ENCODE measurements at regions of chr4 and their contacts with region 1.

Region 1: DNA sequence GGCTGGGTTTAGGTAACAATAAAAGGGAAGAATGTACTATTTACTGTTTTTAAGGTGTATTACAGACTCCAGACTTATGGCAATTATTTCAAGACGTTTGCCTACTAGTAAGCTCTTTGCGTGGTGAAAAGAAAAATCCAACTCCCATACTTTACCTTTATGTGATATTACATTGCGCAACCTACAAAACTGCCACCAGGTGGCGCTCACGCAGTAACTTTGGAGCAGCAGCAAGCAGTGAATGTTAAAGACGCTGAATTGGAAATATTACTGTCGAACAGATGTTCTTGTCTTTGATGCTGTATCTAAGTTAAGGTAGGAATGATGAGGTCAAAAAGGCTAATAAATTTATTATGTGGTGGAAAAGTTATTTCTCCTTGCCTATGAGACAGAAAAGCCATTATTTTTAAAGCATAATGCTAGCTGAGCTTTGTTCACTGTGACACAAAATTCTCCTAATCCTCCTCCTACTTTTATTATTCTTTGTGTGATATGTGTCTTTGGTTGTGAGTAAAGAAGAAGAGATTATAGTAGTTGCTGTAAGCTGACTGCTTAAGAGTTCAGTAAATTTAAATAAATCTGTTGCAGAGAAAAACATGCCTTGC is 1099.8 kb upstream of the TENM3 start:
- DNase-seq: no peak
- H3K4me3 ChIP-seq: no peak overlapping the region
- H3K27ac ChIP-seq: no peak overlapping the region
- H3K4me1 ChIP-seq: no peaks in the 10 kb centered on the region
- H3K27me3 ChIP-seq: peaks cover 0 to 26% (median 0%) of the 10 kb centered on the region in 4 donors
- CTCF ChIP-seq: peak; percentile 52 to 85 (median 78)
- POLR2A ChIP-seq: no peak

Region 2: GRCh38 chr4:180350901-180351300 is 792.5 kb before region 1 on chr4:
- intact Hi-C with region 1: no loop called
- DNase-seq: no peak
- H3K4me3 ChIP-seq: no peak overlapping the region
- H3K27ac ChIP-seq: no peak overlapping the region
- H3K4me1 ChIP-seq: no peaks in the 10 kb centered on the region
- H3K27me3 ChIP-seq: no peaks in the 10 kb centered on the region
- CTCF ChIP-seq: no peak
- POLR2A ChIP-seq: no peak

Region 3: DNA sequence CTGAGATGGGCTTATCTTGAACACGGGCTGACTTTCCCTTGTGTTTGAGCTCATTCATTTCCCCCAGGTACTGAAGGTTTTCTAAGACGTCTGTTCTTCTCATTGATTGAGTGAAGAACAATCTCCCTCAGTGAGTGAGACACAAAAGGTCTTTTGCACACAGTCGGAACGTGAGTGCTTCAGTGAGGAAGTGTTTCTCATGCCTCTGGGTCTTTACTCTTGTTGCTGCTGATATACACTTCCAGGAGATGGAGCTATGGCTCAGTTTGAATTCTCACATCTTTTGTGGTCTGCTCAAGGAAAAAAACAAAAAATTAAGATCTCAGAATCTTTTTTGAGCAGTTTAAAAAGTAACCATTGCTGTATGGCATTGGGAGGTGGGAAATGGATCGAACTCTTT is 117.9 kb after region 1 on chr4:
- intact Hi-C with region 1: no loop called
- DNase-seq: no peak
- H3K4me3 ChIP-seq: no peak overlapping the region
- H3K27ac ChIP-seq: no peak overlapping the region
- H3K4me1 ChIP-seq: no peaks in the 10 kb centered on the region
- H3K27me3 ChIP-seq: no peaks in the 10 kb centered on the region
- CTCF ChIP-seq: no peak
- POLR2A ChIP-seq: no peak

Region 4: GRCh38 chr4:181536811-181537434 is 393.6 kb after region 1 on chr4:
- intact Hi-C with region 1: loop called (anchors 10 kb)
- DNase-seq: no peak
- H3K4me3 ChIP-seq: no peak overlapping the region
- H3K27ac ChIP-seq: no peak overlapping the region
- H3K4me1 ChIP-seq: no peaks in the 10 kb centered on the region
- H3K27me3 ChIP-seq: no peaks in the 10 kb centered on the region
- CTCF ChIP-seq: no peak
- POLR2A ChIP-seq: no peak

Measured in esophagus squamous epithelium (tissue), 5 donors.